ENCODE measurements at regions of chr19 and their contacts with region 1.

Region 1: DNA sequence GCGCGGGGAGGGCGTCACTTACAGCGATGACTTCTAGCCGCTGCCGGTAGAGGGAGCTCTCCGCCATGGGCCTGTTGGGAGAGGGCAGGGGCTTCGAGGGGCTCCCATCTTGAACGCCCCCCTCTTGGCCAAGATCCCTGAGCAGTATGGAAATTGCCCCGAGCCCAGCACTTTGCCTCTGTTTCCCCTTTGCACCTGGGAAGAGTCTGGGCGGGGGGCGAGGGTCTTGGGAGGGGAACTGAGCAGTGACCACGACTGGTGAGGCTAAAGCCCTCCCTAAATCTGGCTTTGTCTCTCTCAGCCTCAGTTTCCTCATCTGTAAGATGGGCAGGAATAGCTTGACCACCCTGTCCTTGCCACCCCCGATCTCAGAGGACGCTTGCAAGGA is 2.8 kb downstream of the PALM3 start:
- DNase-seq: no peak
- H3K4me3 ChIP-seq: no peak overlapping the region
- H3K27me3 ChIP-seq: peaks cover 8% of the 10 kb centered on the region; the same call in 1 of the 2 replicates
- CTCF ChIP-seq: peak; percentile 90

Region 2: DNA sequence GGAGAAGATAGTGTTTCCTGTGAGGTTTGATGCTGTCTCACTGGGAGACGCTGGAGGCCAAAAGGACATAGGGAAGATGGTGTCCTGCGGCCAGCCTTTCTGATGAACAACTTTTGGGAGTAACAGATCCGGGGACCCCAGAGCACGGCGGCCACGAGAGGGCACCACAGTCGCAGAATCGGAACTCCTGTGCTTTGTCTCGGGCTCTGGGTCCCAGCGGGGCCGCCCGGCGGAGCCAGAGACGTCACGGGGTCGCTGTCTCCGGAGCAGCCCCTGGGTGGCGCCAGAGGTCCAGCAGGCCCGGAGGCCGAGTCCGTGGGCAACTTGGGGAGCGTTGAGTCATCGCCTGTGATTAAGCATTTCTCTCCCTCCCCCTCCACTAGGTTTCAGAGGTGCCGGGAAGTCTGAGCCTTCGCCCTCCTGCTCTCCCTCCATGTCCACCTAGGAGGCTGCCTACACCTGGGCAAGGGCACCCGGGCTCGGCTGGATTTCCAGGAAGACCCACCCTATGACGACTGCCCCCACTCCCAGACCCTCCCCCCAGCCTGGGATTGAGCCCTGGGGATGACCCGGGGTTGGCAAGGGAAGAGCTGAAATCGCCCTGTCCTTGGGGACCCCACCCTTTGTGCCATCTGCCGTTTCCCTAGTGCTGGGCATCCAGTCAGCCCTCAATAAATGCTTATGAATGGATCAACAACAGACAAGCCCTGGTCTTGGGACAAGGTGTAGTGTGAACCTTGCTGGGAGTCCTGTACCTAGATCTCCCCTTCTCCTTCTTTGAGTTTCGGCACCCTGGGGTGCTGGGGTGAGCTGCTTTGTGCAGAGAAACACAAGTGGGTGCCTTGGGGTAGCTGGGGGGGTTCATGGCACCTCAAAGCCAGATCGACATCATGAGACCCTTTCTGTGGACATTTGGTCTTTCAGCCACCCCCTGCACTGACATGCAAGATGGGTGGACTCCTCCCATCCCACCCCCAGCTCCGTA is 178.7 kb before region 1 on chr19:
- CTCF ChIA-PET with region 1: interaction called, 17 read pairs
- POLR2A ChIA-PET with region 1: no interaction called
- DNase-seq: peak; percentile 73
- H3K4me3 ChIP-seq: no peak overlapping the region
- H3K27me3 ChIP-seq: no peaks in the 10 kb centered on the region
- CTCF ChIP-seq: peak; percentile 99

Region 3: GRCh38 chr19:14039181-14039580 is 19.9 kb before region 1 on chr19:
- CTCF ChIA-PET with region 1: interaction called, 23 read pairs
- POLR2A ChIA-PET with region 1: no interaction called
- DNase-seq: no peak
- H3K4me3 ChIP-seq: no peak overlapping the region
- H3K27me3 ChIP-seq: no peaks in the 10 kb centered on the region
- CTCF ChIP-seq: no peak

Region 4: GRCh38 chr19:14048443-14049153 is 10.5 kb before region 1 on chr19:
- CTCF ChIA-PET with region 1: interaction called, 23 read pairs
- POLR2A ChIA-PET with region 1: no interaction called
- DNase-seq: no peak
- H3K4me3 ChIP-seq: no peak overlapping the region
- H3K27me3 ChIP-seq: no peaks in the 10 kb centered on the region
- CTCF ChIP-seq: peak; percentile 89

Measured in BJ (cell line).